CD4-positive, alpha-beta T cell (primary cell): ENCODE measurements at regions of chr17 and their contacts with region 1.

Region 1: DNA sequence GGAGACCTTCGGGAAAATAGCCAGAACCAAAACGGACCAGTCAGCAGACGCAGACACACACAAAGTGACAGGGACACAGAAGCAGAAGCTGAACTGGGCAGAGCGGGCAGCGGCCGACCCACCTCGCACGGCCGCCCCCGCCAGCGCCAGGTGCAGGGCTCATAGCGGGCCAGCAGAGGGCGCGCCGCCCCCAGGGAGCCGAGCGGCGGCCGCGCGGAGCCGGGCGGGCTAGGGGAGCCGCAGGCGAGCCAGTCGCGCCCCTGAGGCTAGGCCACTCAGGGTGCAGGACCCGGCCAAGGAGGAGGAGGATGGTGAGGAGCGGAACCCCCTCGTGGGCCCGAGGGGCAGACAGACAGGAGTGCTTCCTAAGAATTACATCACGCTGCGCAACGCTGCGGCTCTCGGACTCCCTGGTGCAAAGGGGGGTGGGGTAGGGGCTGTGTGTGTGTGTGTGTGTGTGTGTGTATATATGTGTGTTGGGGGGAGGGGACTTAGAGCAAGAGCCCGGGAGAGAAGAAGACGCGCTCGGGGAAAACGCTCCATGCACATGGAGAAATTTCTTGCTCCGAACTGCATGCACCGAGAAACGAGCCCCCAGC is 913 bp upstream of the NOG start:
- DNase-seq: peak; percentile 38 to 86 (median 62)
- ATAC-seq: peak; percentile 51
- H3K4me3 ChIP-seq: peak overlapping the region; percentile 65
- H3K4me3 Mint-ChIP-seq: peak overlapping the region; percentile 83
- H3K27ac ChIP-seq: peak overlapping the region in 1 of 2 donors; percentile 44
- H3K27ac Mint-ChIP-seq: peak overlapping the region; percentile 83
- H3K4me1 ChIP-seq: peaks cover 34% of the 10 kb centered on the region
- H3K4me1 Mint-ChIP-seq: peaks cover 18% of the 10 kb centered on the region
- H3K27me3 ChIP-seq: peaks cover 12 to 29% of the 10 kb centered on the region in 2 experiments
- H3K27me3 Mint-ChIP-seq: peaks cover 37% of the 10 kb centered on the region
- CTCF ChIP-seq: peak; percentile 77

Region 2: DNA sequence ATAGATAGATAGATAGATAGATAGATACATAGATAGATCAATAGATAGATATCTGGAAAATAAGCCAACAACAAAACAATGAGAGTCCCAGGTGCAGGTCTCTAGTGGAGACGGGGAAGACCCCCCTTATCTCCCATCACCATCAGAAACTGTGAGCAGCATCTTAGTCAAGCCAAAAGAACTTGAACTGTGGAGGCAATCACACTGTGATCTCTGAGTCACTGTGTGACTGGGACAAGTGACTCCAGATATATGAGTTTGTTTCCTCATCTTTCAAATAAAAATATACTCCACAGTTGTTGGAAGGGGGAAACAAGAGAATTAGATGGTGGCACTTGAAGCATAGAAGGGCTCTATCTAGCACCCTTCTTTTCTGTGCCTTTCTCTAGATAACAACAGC is 43.1 kb after region 1 on chr17:
- CTCF ChIA-PET with region 1: no interaction called
- POLR2A ChIA-PET with region 1: interaction called, 16 read pairs
- intact Hi-C with region 1: loop called in 1 of 2 experiments (anchors 2 kb)
- DNase-seq: no peak
- ATAC-seq: no peak
- H3K4me3 ChIP-seq: no peak overlapping the region
- H3K4me3 Mint-ChIP-seq: no peak overlapping the region
- H3K27ac ChIP-seq: no peak overlapping the region
- H3K27ac Mint-ChIP-seq: no peak overlapping the region
- H3K4me1 ChIP-seq: peaks cover 4% of the 10 kb centered on the region
- H3K4me1 Mint-ChIP-seq: no peaks in the 10 kb centered on the region
- H3K27me3 ChIP-seq: no peaks in the 10 kb centered on the region
- H3K27me3 Mint-ChIP-seq: no peaks in the 10 kb centered on the region
- CTCF ChIP-seq: no peak

Region 3: DNA sequence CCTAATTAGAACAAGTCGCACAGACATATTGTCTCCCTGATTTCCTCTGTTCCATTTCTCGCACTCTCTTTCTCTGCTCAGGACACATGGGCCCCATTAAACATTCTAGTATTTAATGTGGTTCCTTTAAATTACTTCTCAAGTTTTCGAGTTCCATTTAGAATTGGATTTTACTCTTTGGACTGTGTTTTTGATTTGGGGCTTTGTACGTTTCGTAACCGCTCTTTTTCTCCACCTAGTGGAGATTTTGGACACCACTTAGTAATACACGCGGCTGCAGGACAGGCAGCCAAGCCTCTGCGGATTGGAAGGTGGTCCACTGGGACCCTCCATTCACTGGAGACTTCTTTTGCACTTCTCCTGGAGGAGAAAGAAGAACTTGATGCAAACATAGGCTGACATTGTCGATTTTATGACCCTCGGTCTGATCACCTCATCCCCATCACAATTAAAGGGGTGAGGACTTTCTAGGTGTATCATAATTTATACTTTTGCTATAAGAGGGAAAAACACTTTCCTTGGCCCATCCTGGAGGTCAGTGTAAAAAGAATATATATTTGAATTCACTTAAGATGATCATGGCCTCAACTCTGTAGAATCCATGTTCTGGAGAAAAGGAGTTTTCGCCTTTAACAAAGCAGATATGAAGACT is 86.7 kb after region 1 on chr17:
- CTCF ChIA-PET with region 1: no interaction called
- POLR2A ChIA-PET with region 1: interaction called, 13 read pairs
- intact Hi-C with region 1: loop called in 1 of 2 experiments (anchors 1 kb)
- DNase-seq: peak in 4 of 14 experiments; percentile 19 to 55 (median 36)
- ATAC-seq: peak; percentile 60
- H3K4me3 ChIP-seq: peak overlapping the region; percentile 14
- H3K4me3 Mint-ChIP-seq: peak overlapping the region; percentile 86
- H3K27ac ChIP-seq: no peak overlapping the region
- H3K27ac Mint-ChIP-seq: no peak overlapping the region
- H3K4me1 ChIP-seq: peaks cover 35% of the 10 kb centered on the region
- H3K4me1 Mint-ChIP-seq: peaks cover 6% of the 10 kb centered on the region
- H3K27me3 ChIP-seq: peaks cover 29 to 54% of the 10 kb centered on the region in 2 experiments
- H3K27me3 Mint-ChIP-seq: peaks cover 68% of the 10 kb centered on the region
- CTCF ChIP-seq: peak; percentile 68

Region 4: DNA sequence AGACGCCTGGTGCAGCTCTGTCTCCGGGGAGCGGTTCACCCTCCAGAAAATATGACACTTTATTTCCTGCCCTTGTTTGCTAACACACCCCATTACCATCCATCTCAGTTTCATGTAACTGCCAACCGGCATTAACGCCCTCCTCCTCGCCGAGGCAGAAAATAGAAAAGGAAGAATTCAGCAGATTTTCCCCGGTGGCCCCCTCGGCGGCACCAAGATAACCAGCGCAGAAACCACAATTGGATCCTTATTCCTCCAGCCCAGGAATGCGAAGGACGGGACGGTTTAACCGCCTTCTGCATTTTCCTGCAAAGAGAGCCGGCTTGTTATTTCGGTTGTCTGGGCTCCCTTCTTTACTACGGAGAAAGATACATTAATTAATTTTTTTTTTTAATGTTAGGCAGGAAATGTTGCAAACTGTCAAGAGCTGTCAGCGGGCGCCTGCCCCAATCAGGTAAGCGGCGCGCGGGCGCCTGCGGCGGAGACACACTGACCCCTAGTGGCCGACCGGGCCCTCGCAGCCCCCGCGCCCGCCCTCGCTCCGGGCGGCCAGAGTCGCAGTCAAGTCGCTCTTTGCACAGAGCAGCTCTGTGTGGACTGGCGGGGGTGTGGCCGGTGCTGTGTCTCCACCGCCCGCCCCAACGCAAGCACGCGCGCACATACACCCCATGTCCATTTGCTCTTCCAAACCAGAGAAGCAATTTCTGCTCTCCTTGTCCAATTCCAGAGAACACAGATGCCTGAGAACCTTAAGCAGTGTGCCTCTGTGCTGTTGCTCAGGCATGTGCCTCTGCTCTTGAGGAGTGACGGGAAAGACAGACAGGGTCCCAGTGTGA is 187.5 kb after region 1 on chr17:
- CTCF ChIA-PET with region 1: interaction called, 15 read pairs
- POLR2A ChIA-PET with region 1: interaction called, 35 read pairs
- intact Hi-C with region 1: loop called (anchors 1 to 2 kb)
- DNase-seq: peak; percentile 75 to 93 (median 85)
- ATAC-seq: peak; percentile 95
- H3K4me3 ChIP-seq: peak overlapping the region; percentile 64
- H3K4me3 Mint-ChIP-seq: peak overlapping the region; percentile 90
- H3K27ac ChIP-seq: peak overlapping the region; percentile 71 to 77
- H3K27ac Mint-ChIP-seq: peak overlapping the region; percentile 97
- H3K4me1 ChIP-seq: peaks cover 22% of the 10 kb centered on the region
- H3K4me1 Mint-ChIP-seq: peaks cover 26% of the 10 kb centered on the region
- H3K27me3 ChIP-seq: no peaks in the 10 kb centered on the region
- H3K27me3 Mint-ChIP-seq: no peaks in the 10 kb centered on the region
- CTCF ChIP-seq: peak; percentile 97

Region 5: DNA sequence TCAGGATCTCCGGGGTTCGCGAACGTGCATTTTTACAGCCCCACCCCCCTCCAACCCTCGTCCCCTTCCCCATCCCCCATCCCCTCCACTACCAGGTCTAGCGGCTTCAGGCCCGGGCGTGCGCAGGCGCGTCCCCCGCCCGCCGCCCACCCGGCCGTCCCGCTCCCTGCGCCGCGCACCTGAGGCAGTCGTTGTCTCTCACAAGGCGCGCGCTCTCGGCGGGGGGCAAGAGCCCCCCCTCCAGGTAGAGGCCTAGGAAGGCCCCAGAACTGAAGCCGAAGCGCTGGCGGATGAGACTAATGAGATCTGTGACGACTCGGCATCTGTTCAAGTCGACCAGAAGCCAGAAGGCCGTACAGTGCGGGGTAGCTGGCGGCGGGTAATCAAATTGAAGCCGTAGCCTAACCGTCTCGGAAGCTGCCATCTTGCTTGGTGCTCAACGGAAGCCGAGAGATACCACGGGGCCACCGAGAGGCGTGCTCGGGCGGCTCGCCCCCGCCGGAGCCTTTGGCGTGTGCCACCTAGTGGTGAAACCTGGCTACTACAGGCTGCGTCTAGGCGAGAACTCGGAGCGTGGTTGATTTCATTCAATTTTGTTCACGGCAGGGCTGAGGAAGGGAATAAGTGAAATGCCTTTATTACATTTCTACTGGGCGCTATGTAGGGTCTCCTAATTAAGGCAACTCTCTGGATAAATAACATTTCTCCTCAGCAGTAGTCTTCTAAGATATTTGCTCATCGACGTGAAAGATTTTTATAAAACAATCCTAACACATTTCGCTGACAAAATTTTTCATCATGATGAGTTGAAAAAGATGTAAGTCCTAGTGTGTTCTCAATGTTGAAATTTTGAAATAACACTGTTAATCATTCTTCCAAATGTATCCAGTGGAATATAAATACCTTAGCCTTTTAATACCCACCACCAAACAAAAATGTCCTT is 368.3 kb after region 1 on chr17 and contains the start of gene COIL:
- CTCF ChIA-PET with region 1: no interaction called
- POLR2A ChIA-PET with region 1: no interaction called
- intact Hi-C with region 1: loop called in 1 of 2 experiments (anchors 10 kb)
- DNase-seq: peak; percentile 89 to 96 (median 92)
- ATAC-seq: peak; percentile 97
- H3K4me3 ChIP-seq: peak within 1 kb of the TSS; percentile 68
- H3K4me3 Mint-ChIP-seq: peak within 1 kb of the TSS; percentile 93
- H3K27ac ChIP-seq: peak within 1 kb of the TSS; percentile 82 to 83
- H3K27ac Mint-ChIP-seq: peak within 1 kb of the TSS; percentile 78
- H3K4me1 ChIP-seq: peaks cover 26% of the 10 kb centered on the region
- H3K4me1 Mint-ChIP-seq: peaks cover 27% of the 10 kb centered on the region
- H3K27me3 ChIP-seq: peaks cover 0 to 2% of the 10 kb centered on the region in 2 experiments
- H3K27me3 Mint-ChIP-seq: no peaks in the 10 kb centered on the region
- CTCF ChIP-seq: peak; percentile 96
- total RNA-seq, gene COIL: 19.4 to 20.3 TPM